Activated T-helper 2 cell treated with anti-CD3 and anti-CD28 coated beads, Interferon-gamma antibody, Interleukin-2, Interleukin-4, amounts not matched to agents 10 μg/mL and 5 μg/mL and 100 μg/mL, durations not matched to agents 14 hours and 24 hours and 36 hours (primary cell): ENCODE measurements at regions of chr1 and their contacts with region 1.

Region 1: DNA sequence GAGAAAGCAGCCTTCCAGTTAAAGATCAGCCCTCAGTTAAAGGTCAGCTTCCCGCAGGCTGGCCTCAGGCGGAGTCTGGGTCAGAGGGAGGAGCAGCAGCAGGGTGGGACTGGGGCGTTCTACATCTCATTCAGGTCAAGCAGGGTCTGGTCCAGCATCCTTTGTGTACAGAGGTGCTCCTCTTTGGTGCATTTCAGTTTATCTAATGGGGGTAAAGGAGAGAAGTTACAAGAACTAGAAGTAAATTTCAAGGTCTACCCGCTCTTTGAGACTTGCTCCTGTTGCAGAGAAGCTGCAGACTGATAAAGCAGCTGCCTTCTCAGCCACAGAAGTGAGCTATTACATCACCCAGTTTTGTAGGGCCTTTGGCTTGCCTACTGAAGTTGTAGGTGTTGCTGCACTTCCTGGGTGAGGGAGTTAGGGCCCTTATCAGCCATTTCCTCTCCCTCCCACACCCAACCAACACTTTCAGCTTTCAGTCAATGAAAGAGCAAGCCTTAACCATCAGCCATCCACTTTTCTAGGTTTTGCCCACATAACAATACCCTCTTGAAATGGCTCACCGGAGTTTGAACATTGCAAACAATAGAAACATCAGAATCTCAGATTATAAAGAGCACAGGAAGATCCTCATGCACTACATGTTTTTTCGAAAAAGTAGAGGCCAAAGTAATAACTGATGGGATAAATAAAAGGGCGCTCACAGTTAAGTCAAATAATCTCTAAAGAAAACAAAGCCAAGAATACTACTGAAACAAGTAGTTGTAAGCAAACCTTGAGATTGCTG is 2.8 kb upstream of the NUP210L start:
- DNase-seq: peak; percentile 79
- H3K4me3 Mint-ChIP-seq: peak overlapping the region; percentile 65
- H3K27ac Mint-ChIP-seq: peak overlapping the region; percentile 86
- H3K4me1 Mint-ChIP-seq: peaks cover 52% of the 10 kb centered on the region
- H3K27me3 Mint-ChIP-seq: no peaks in the 10 kb centered on the region

Region 2: GRCh38 chr1:153790966-153791647 is 366.6 kb before region 1 on chr1:
- intact Hi-C with region 1: loop called (anchors 5 kb)
- DNase-seq: peak; percentile 24
- H3K4me3 Mint-ChIP-seq: peak overlapping the region; percentile 52
- H3K27ac Mint-ChIP-seq: peak overlapping the region; percentile 93
- H3K4me1 Mint-ChIP-seq: peaks cover 31% of the 10 kb centered on the region
- H3K27me3 Mint-ChIP-seq: no peaks in the 10 kb centered on the region

Region 3: GRCh38 chr1:154081386-154082126 is 76.2 kb before region 1 on chr1:
- intact Hi-C with region 1: no loop called
- DNase-seq: no peak
- H3K4me3 Mint-ChIP-seq: no peak overlapping the region
- H3K27ac Mint-ChIP-seq: no peak overlapping the region
- H3K4me1 Mint-ChIP-seq: no peaks in the 10 kb centered on the region
- H3K27me3 Mint-ChIP-seq: peaks cover 3% of the 10 kb centered on the region

Region 4: GRCh38 chr1:154170547-154171222 is 13.0 kb after region 1 on chr1:
- intact Hi-C with region 1: loop called (anchors 2 kb)
- DNase-seq: no peak
- H3K4me3 Mint-ChIP-seq: no peak overlapping the region
- H3K27ac Mint-ChIP-seq: peak overlapping the region; percentile 79
- H3K4me1 Mint-ChIP-seq: peaks cover 36% of the 10 kb centered on the region
- H3K27me3 Mint-ChIP-seq: no peaks in the 10 kb centered on the region

Region 5: DNA sequence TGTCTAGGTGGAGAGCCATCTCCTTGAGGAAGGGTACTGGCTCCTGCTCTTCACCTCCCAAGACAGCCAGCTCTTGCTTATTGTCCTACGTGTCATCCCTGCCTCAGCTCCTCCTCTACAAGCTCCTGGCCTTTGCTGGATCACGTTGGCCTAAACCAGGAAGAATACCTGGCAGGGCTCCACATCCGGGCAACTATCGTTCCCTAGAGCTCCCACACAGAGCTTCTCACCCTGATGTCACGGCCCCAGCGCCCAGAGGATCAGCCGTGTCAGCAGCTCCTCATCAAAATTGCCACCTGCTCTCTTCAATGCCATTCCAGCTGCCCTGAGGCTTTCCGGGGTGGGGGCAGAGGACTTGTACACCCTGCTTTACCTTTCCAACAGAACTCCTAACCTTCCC is 36.1 kb after region 1 on chr1:
- intact Hi-C with region 1: no loop called
- DNase-seq: no peak
- H3K4me3 Mint-ChIP-seq: no peak overlapping the region
- H3K27ac Mint-ChIP-seq: no peak overlapping the region
- H3K4me1 Mint-ChIP-seq: peaks cover 3% of the 10 kb centered on the region
- H3K27me3 Mint-ChIP-seq: peaks cover 34% of the 10 kb centered on the region

Region 6: GRCh38 chr1:154220071-154220969 is 62.6 kb after region 1 on chr1 and contains the start of gene UBAP2L:
- intact Hi-C with region 1: loop called (anchors 2 kb)
- DNase-seq: peak; percentile 99
- H3K4me3 Mint-ChIP-seq: peak within 1 kb of the TSS; percentile 93
- H3K27ac Mint-ChIP-seq: peak within 1 kb of the TSS; percentile 97
- H3K4me1 Mint-ChIP-seq: peaks cover 55% of the 10 kb centered on the region
- H3K27me3 Mint-ChIP-seq: no peaks in the 10 kb centered on the region
- total RNA-seq, gene UBAP2L: 259 and 263 TPM in 2 replicates